ENCODE measurements at regions of chr5 and their contacts with region 1.

Region 1: GRCh38 chr5:79514391-79515105 is 614 bp upstream of the HOMER1 start:
- DNase-seq: peak; percentile 95
- H3K4me3 Mint-ChIP-seq: peak overlapping the region; percentile 94
- H3K27ac Mint-ChIP-seq: peak overlapping the region; percentile 97
- H3K4me1 Mint-ChIP-seq: peaks cover 26% of the 10 kb centered on the region
- H3K27me3 Mint-ChIP-seq: no peaks in the 10 kb centered on the region
- CTCF ChIP-seq: no peak

Region 2: GRCh38 chr5:79346420-79346824 is 168.1 kb before region 1 on chr5:
- CTCF ChIA-PET with region 1: no interaction called
- POLR2A ChIA-PET with region 1: no interaction called
- intact Hi-C with region 1: no loop called
- DNase-seq: peak; percentile 52
- H3K4me3 Mint-ChIP-seq: no peak overlapping the region
- H3K27ac Mint-ChIP-seq: no peak overlapping the region
- H3K4me1 Mint-ChIP-seq: no peaks in the 10 kb centered on the region
- H3K27me3 Mint-ChIP-seq: no peaks in the 10 kb centered on the region
- CTCF ChIP-seq: no peak

Region 3: DNA sequence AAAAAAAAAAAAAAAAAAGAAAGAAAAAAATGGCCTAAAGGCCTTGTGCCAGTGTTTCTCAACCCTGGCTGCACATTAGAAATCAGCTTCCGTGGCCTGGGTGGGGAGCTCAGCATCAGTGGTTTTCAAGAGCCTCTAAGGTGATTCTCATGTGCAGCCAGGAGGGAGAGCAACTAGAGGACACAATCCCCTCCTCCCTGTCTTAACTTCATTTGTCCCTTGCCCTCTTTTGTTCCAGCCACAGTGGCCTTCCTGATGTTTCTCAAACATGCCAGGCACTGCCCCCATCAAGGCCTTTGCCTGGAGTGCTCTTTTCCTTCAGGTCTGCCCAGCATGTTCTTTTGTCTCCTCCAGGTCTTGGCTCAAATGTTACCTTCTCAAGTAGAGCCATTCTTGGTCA is 43.0 kb before region 1 on chr5:
- CTCF ChIA-PET with region 1: interaction called, 3 read pairs
- POLR2A ChIA-PET with region 1: interaction called, 11 read pairs
- intact Hi-C with region 1: no loop called
- DNase-seq: no peak
- H3K4me3 Mint-ChIP-seq: no peak overlapping the region
- H3K27ac Mint-ChIP-seq: peak overlapping the region; percentile 12
- H3K4me1 Mint-ChIP-seq: peaks cover 7% of the 10 kb centered on the region
- H3K27me3 Mint-ChIP-seq: no peaks in the 10 kb centered on the region
- CTCF ChIP-seq: no peak

Region 4: GRCh38 chr5:79488775-79489174 is 25.8 kb before region 1 on chr5:
- CTCF ChIA-PET with region 1: interaction called, 4 read pairs
- POLR2A ChIA-PET with region 1: interaction called, 235 read pairs
- intact Hi-C with region 1: no loop called
- DNase-seq: no peak
- H3K4me3 Mint-ChIP-seq: no peak overlapping the region
- H3K27ac Mint-ChIP-seq: no peak overlapping the region
- H3K4me1 Mint-ChIP-seq: peaks cover 12% of the 10 kb centered on the region
- H3K27me3 Mint-ChIP-seq: no peaks in the 10 kb centered on the region
- CTCF ChIP-seq: no peak

Region 5: GRCh38 chr5:79495319-79495718 is 19.2 kb before region 1 on chr5:
- CTCF ChIA-PET with region 1: interaction called, 23 read pairs
- POLR2A ChIA-PET with region 1: interaction called, 235 read pairs
- intact Hi-C with region 1: no loop called
- DNase-seq: peak; percentile 52
- H3K4me3 Mint-ChIP-seq: no peak overlapping the region
- H3K27ac Mint-ChIP-seq: peak overlapping the region; percentile 60
- H3K4me1 Mint-ChIP-seq: peaks cover 37% of the 10 kb centered on the region
- H3K27me3 Mint-ChIP-seq: no peaks in the 10 kb centered on the region
- CTCF ChIP-seq: no peak

Region 6: GRCh38 chr5:79544131-79544530 is 29.6 kb after region 1 on chr5:
- CTCF ChIA-PET with region 1: no interaction called
- POLR2A ChIA-PET with region 1: no interaction called
- intact Hi-C with region 1: no loop called
- DNase-seq: no peak
- H3K4me3 Mint-ChIP-seq: no peak overlapping the region
- H3K27ac Mint-ChIP-seq: no peak overlapping the region
- H3K4me1 Mint-ChIP-seq: peaks cover 9% of the 10 kb centered on the region
- H3K27me3 Mint-ChIP-seq: no peaks in the 10 kb centered on the region
- CTCF ChIP-seq: no peak

Region 7: GRCh38 chr5:79612667-79613198 is 98.2 kb after region 1 on chr5:
- CTCF ChIA-PET with region 1: no interaction called
- POLR2A ChIA-PET with region 1: interaction called, 82 read pairs
- intact Hi-C with region 1: no loop called
- DNase-seq: no peak
- H3K4me3 Mint-ChIP-seq: peak overlapping the region; percentile 94
- H3K27ac Mint-ChIP-seq: peak overlapping the region; percentile 99
- H3K4me1 Mint-ChIP-seq: peaks cover 16% of the 10 kb centered on the region
- H3K27me3 Mint-ChIP-seq: no peaks in the 10 kb centered on the region
- CTCF ChIP-seq: no peak

Region 8: DNA sequence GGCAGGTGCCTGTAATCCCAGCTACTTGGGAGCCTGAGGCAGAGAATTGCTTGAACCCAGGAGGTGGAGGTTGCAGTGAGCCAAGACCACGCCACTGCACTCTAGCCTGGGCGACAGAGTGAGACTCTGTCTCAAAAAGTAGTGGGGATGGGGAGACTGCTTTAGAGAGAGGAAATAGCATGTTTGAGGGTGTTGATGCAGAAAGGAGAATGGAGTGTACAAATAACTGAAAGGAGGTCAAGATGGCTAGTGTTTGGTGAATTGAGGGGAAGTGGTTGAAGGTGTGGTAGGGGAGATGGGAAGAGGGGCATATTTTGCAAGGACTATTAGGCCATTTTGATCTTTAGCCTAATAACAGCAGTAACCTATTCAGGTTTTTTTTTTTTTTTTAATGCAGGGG is 115.9 kb after region 1 on chr5:
- CTCF ChIA-PET with region 1: no interaction called
- POLR2A ChIA-PET with region 1: no interaction called
- intact Hi-C with region 1: no loop called
- DNase-seq: no peak
- H3K4me3 Mint-ChIP-seq: no peak overlapping the region
- H3K27ac Mint-ChIP-seq: no peak overlapping the region
- H3K4me1 Mint-ChIP-seq: no peaks in the 10 kb centered on the region
- H3K27me3 Mint-ChIP-seq: no peaks in the 10 kb centered on the region
- CTCF ChIP-seq: no peak